ENCODE measurements at regions of chr3 and their contacts with region 1.

Region 1: GRCh38 chr3:27767000-27767399 is 44.9 kb upstream of the EOMES start:
- DNase-seq: no peak
- H3K4me3 Mint-ChIP-seq: no peak overlapping the region
- H3K27ac Mint-ChIP-seq: no peak overlapping the region
- H3K4me1 Mint-ChIP-seq: peaks cover 19% of the 10 kb centered on the region
- H3K27me3 Mint-ChIP-seq: peaks cover 4% of the 10 kb centered on the region

Region 2: DNA sequence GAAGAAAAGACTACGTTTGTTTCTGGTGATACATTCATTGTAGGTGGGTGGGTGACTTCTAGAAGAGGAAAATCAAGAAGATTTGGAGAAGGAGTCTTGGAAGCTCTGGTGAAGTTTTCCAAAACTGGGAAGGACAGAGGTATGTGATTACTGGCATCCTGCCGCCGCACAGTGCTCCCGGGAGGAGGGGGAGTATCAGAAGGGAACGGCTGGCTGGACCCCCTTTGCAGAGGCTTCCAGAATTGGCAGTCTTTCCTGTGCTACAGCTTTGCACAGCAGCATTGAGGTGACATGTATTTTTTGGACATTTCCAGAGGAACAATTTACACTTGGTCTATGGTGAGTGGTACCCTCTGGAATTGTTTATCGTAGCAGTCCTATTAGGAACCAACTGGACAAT is 30.8 kb after region 1 on chr3:
- intact Hi-C with region 1: loop called (anchors 2 kb)
- DNase-seq: no peak
- H3K4me3 Mint-ChIP-seq: no peak overlapping the region
- H3K27ac Mint-ChIP-seq: no peak overlapping the region
- H3K4me1 Mint-ChIP-seq: peaks cover 32% of the 10 kb centered on the region
- H3K27me3 Mint-ChIP-seq: no peaks in the 10 kb centered on the region